ENCODE measurements at regions of chr22 and their contacts with region 1.

Region 1: GRCh38 chr22:41022470-41023298 is 69.7 kb upstream of the EP300 start:
- DNase-seq: peak; percentile 92 to 94
- ATAC-seq: peak; percentile 87 to 90
- H3K4me3 ChIP-seq: peak overlapping the region; percentile 71 to 85 (median 81)
- H3K27ac ChIP-seq: peak overlapping the region; percentile 89 to 99 (median 94)
- H3K4me1 ChIP-seq: peaks cover 5% of the 10 kb centered on the region in 2 donors
- H3K27me3 ChIP-seq: no peaks in the 10 kb centered on the region
- CTCF ChIP-seq: peak in 2 of 5 experiments; percentile 3 to 6
- POLR2A ChIP-seq: peak; percentile 84 to 88

Region 2: DNA sequence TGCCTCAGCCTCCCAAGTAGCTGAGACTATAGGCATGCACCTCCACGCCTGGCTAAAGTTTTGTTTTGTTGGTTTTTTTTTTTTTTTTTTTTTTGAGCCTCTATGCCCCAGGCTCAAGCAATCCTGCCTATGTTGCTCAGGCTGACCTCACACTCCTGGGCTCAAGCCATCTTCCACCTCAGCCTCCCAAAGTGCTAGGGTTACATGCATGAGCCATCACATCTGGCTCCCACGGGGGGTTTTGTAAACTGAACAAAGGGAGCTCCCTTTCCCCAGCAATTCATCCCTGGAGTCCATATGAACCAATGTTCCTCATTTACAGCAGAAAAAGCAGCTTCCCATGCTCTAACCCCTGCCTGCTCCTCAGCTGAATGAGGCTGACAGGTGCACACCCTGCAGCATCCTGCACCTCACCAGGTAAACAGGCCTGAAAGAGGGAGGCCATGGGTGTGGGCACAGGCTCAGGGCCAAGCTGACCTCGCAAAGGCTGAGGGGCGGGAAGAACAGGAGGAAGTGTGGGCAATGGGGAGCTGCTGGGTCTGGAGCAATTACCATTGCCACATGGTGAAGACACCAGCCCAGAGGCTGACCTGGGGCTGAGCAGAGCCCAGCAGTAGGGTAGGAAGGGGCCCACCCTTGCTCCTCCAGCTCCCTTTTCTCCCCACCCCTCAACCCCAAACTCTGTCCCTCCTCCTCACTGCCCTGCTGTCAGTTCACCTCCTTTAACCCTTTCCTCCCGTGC is 13.3 kb before region 1 on chr22:
- in situ Hi-C with region 1: no loop called
- intact Hi-C with region 1: no loop called
- DNase-seq: no peak
- ATAC-seq: no peak
- H3K4me3 ChIP-seq: no peak overlapping the region
- H3K27ac ChIP-seq: no peak overlapping the region
- H3K4me1 ChIP-seq: no peaks in the 10 kb centered on the region
- H3K27me3 ChIP-seq: no peaks in the 10 kb centered on the region
- CTCF ChIP-seq: no peak
- POLR2A ChIP-seq: no peak

Region 3: DNA sequence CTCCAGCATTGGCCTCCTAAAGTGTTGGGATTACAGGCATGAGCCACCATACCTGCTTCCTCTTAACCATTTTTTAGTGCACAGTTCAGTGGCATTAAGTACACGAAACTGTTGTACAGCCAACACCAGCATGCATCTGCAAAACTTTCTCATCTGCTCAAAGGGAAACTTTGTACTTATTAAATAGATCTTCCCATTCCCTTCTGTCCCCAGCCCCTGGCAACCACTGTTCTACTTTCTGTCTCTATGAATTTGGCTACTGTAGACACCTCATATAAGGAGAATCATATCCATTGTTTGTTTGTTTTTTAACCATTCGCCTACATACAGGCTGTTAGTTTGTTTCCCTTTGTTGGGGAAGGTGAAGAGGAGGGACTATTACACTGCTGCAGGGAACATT is 63.2 kb after region 1 on chr22:
- in situ Hi-C with region 1: loop called in 2 of 4 experiments (anchors 10 kb)
- intact Hi-C with region 1: loop called (anchors 1 kb)
- DNase-seq: no peak
- ATAC-seq: no peak
- H3K4me3 ChIP-seq: no peak overlapping the region
- H3K27ac ChIP-seq: no peak overlapping the region
- H3K4me1 ChIP-seq: peaks cover 0 to 4% of the 10 kb centered on the region in 2 donors
- H3K27me3 ChIP-seq: no peaks in the 10 kb centered on the region
- CTCF ChIP-seq: no peak
- POLR2A ChIP-seq: no peak

Region 4: GRCh38 chr22:41197038-41197972 is 174.6 kb after region 1 on chr22:
- in situ Hi-C with region 1: no loop called
- intact Hi-C with region 1: loop called (anchors 2 kb)
- DNase-seq: peak; percentile 57 to 76
- ATAC-seq: peak; percentile 90 to 91
- H3K4me3 ChIP-seq: peak overlapping the region; percentile 85 to 98 (median 93)
- H3K27ac ChIP-seq: peak overlapping the region; percentile 73 to 78 (median 76)
- H3K4me1 ChIP-seq: peaks cover 8 to 9% of the 10 kb centered on the region in 2 donors
- H3K27me3 ChIP-seq: no peaks in the 10 kb centered on the region
- CTCF ChIP-seq: peak in 2 of 5 experiments; percentile 23 to 39
- POLR2A ChIP-seq: peak; percentile 26 to 49

Region 5: DNA sequence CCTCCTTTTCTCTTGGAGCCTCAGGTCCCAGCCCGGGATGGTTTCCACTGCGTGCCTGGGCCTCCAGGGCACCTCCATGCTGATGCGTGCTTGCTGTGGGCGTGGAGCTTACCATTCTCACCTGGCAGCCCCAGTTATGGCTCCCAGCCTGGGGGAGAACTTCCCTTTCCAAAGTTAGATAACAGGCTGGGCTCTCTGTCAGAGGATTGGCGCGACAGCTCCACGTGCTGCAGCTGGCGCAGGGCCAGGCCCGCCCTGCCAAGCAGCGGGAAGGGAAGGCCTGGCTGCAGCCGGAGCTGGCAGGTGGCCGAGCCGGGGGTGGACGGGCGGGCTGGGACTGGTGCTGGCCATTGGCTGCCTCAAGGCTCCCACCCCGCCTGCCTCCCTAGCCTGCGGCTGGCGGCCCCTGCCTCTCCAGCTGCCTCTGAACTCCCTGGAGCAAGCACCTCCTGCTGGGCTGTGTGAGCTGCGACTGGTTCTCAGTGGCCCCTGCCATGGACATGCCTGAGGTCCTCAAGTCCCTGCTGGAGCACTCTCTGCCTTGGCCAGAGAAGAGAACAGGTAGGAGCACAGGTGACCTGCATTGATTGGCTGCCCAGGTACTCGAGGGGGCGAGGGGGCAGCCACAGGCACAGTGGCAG is 344.5 kb after region 1 on chr22:
- in situ Hi-C with region 1: no loop called
- intact Hi-C with region 1: loop called (anchors 5 kb)
- DNase-seq: peak; percentile 90 to 97
- ATAC-seq: peak; percentile 79 to 84
- H3K4me3 ChIP-seq: peak overlapping the region; percentile 37 to 51 (median 44)
- H3K27ac ChIP-seq: peak overlapping the region; percentile 76 to 86 (median 82)
- H3K4me1 ChIP-seq: peaks cover 26 to 44% of the 10 kb centered on the region in 2 donors
- H3K27me3 ChIP-seq: no peaks in the 10 kb centered on the region
- CTCF ChIP-seq: peak in 1 of 5 experiments; percentile 44
- POLR2A ChIP-seq: peak; percentile 13 to 30

Measured in gastrocnemius medialis (tissue), 4 donors.